HEK293 (cell line): ENCODE measurements at regions of chrX and their contacts with region 1.

Region 1: GRCh38 chrX:73855546-73855945 is 292.5 kb downstream of the CHIC1 start:
- H3K4me3 ChIP-seq: no peak overlapping the region
- H3K27ac ChIP-seq: no peak overlapping the region
- H3K4me1 ChIP-seq: no peaks in the 10 kb centered on the region
- CTCF ChIP-seq: peak; percentile 89

Region 2: GRCh38 chrX:73647632-73648322 is 207.8 kb before region 1 on chrX:
- CTCF ChIA-PET with region 1: no interaction called
- POLR2A ChIA-PET with region 1: no interaction called
- H3K4me3 ChIP-seq: no peak overlapping the region
- H3K27ac ChIP-seq: no peak overlapping the region
- H3K4me1 ChIP-seq: no peaks in the 10 kb centered on the region
- CTCF ChIP-seq: no peak

Region 3: DNA sequence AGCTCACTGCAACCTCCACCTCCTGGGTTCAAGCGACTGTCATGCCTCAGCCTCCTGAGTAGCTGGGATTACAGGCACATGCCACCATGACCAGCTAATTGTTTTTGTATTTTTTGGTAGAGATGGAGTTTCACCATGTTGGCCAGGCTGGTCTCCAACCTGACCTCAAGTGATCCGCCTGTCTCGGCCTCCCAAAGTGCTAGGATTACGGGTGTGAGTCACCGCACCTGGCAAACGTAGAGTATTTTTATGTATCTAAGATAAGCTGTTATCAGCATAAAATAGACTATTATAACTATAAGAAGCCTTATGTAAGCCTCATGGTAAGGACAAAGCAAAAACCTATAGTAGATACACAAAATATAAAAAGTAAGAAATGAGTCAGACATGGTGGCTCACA is 11.6 kb after region 1 on chrX:
- CTCF ChIA-PET with region 1: interaction called, 16 read pairs
- POLR2A ChIA-PET with region 1: no interaction called
- H3K4me3 ChIP-seq: no peak overlapping the region
- H3K27ac ChIP-seq: no peak overlapping the region
- H3K4me1 ChIP-seq: no peaks in the 10 kb centered on the region
- CTCF ChIP-seq: no peak

Region 4: GRCh38 chrX:73943693-73944562 is 88.4 kb after region 1 on chrX:
- CTCF ChIA-PET with region 1: interaction called, 25 read pairs
- POLR2A ChIA-PET with region 1: interaction called, 17 read pairs
- H3K4me3 ChIP-seq: peak overlapping the region; percentile 80
- H3K27ac ChIP-seq: peak overlapping the region; percentile 98
- H3K4me1 ChIP-seq: peaks cover 12% of the 10 kb centered on the region
- CTCF ChIP-seq: peak; percentile 87

Region 5: DNA sequence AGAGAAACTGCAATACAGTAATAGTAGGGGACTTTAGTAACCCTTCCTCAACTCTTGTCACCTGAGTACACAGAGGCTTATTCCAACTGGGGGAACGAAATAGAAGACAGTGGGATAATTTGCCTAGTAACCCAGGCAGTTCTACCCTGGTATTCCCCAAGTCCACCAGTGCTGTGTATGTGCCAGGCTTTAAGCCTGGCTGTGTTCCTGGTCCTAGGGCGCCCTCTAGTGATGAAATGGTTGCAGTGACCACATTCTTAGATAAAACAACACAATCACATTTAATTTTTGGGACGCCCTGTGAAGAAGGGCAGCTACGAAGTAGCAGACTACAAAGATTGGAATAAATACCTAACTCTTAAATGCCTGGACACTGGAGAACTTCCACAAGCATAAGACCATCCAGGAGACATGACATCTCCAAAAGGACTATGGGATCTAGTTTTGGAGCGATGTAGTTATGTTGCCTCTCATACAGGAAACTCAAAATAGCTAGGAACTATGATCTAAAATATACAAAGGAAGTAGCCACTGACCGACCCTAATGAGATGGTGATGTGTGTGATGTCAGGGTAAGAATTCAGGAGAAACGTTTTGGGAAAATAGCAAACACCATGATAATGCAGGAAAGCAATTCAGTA is 160.0 kb after region 1 on chrX:
- CTCF ChIA-PET with region 1: interaction called, 176 read pairs
- POLR2A ChIA-PET with region 1: interaction called, 5 read pairs
- H3K4me3 ChIP-seq: no peak overlapping the region
- H3K27ac ChIP-seq: no peak overlapping the region
- H3K4me1 ChIP-seq: no peaks in the 10 kb centered on the region
- CTCF ChIP-seq: peak; percentile 93

Region 6: DNA sequence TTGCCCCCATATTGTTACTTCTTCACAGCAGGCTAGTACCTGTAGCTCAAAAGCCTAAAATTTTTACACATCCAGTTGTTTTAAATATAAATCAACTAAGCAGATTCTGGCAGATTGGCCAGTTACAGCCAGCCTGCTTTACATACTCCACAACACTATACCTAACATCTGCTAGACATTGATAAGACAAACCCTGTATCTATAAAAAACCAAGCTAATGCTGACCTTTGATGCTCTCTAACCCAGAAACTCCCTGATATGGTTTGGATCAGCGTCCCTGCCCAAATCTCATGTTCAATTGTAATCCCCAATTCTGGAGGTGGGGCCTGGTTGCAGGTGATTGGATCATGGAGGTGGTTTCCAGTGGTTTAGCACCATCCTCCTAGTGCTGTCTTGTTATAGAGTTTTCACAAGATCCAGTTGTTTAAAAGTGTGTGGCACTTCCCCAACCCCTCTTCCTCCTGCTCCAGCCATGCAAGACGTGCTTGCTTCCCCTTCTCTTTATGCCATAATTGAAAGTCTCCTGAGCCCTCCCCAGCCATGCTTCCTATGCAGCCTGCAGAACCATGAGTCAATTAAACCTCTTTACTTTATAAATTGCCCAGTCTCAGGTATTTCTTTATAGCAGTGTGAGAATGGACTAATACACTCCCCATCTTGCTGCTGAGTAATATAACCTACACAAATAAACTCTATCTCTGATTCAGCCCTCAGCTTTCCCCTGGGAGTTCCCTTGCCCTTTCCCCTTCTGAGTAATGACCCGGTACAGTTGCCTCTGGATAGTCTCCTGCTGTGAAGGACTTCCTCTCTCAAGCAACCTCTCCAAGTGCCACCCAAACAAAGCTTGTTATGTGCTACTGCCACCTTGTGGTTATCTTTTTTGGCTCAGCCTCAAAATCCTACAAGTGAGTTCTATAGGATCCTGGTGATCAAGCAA is 488.1 kb after region 1 on chrX:
- CTCF ChIA-PET with region 1: interaction called, 17 read pairs
- POLR2A ChIA-PET with region 1: no interaction called
- H3K4me3 ChIP-seq: no peak overlapping the region
- H3K27ac ChIP-seq: 0 out of 2 replicates have a peak overlapping the region, but pooled peaks have one; percentile 18
- H3K4me1 ChIP-seq: no peaks in the 10 kb centered on the region
- CTCF ChIP-seq: peak; percentile 60; the same call in 1 of the 2 replicates